Head of caudate nucleus (tissue), 42 donors: ENCODE measurements at regions of chr9 and their contacts with region 1.

Region 1: GRCh38 chr9:117869287-117869686 is 165.1 kb downstream of the TLR4 start:
- DNase-seq: no peak

Region 2: DNA sequence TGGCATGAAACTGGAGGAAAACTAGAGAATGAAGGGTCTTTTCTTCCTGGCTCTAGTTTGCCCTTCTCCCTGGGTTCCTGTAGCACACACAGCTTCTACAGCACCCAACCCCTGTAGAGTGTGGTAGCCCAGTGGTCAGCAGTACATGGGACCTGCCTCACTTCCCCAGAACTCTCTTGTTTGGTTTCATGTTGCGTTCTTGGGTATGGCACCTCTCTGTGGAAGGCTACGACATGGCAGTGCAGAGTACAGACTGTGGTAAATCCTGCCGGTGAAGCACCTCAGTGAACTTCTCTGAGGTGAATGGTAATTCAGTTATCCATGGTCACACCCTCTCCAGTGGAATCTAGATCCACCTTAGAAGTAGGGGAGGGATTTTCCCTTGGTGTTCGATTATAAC is 59.5 kb before region 1 on chr9:
- intact Hi-C with region 1: loop called (anchors 10 kb)
- DNase-seq: no peak